Activated T-helper 2 cell treated with anti-CD3 and anti-CD28 coated beads, Interferon-gamma antibody, Interleukin-2, Interleukin-4, amounts not matched to agents 10 μg/mL and 5 μg/mL and 100 μg/mL, durations not matched to agents 14 hours and 24 hours and 36 hours (primary cell): ENCODE measurements at regions of chr11 and their contacts with region 1.

Region 1: GRCh38 chr11:33857933-33858371 is 33.9 kb downstream of the LMO2 start:
- DNase-seq: peak; percentile 48
- H3K4me3 Mint-ChIP-seq: no peak overlapping the region
- H3K27ac Mint-ChIP-seq: no peak overlapping the region
- H3K4me1 Mint-ChIP-seq: no peaks in the 10 kb centered on the region
- H3K27me3 Mint-ChIP-seq: peaks cover 49% of the 10 kb centered on the region

Region 2: DNA sequence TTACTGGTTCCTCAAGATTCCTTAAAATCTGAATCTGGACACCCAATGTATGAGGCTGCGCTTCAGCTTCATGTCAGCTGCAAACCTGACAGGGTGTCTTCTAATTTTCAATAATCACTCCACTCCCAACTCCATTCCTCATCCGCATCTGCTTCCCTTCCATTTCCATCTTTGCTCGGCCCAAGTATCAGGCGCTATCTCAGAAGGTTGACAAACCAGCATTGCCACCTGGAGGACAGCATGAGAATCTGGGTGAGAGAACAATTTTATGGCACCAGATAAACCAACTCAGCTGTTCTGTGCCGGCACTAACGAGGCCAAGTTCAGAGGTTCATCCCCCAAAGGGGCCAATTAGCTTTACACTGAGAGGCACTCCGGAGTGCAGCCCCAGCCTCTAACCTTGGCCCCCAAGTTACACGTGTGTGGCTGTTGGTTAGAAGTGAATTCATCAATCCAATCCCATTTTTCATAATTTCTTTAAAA is 113.1 kb after region 1 on chr11:
- intact Hi-C with region 1: loop called (anchors 1 kb)
- DNase-seq: no peak
- H3K4me3 Mint-ChIP-seq: no peak overlapping the region
- H3K27ac Mint-ChIP-seq: no peak overlapping the region
- H3K4me1 Mint-ChIP-seq: no peaks in the 10 kb centered on the region
- H3K27me3 Mint-ChIP-seq: peaks cover 16% of the 10 kb centered on the region

Region 3: DNA sequence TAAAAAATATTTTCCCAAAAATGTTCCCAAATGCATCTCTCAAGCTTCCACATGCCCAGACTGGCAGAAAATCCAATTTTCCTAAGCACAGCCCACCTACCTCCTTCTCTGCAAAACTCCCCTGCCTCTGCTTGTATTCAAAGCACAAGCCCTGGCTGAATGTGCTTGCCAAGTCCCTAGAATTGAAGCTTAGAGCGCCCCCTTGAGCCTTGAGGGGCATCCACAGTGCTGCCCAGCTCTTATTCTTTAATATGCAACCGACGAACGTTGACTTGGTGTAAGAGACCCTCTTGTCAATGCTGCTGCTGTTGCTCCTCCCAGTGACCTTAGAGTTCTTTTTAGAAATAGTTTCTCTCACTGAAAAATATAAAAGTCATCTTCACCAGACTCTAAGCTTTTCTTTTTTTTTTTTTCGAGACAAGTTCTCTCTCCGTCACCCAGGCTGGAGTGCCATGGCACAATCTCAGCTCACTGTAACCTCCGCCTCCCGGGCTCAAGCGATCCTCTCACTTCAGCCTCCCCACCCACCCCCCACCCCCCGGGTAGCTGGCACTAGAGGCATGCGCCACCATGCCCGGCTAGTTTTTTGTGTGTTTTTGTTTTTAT is 130.1 kb after region 1 on chr11:
- intact Hi-C with region 1: loop called (anchors 1 kb)
- DNase-seq: peak; percentile 54
- H3K4me3 Mint-ChIP-seq: no peak overlapping the region
- H3K27ac Mint-ChIP-seq: no peak overlapping the region
- H3K4me1 Mint-ChIP-seq: peaks cover 5% of the 10 kb centered on the region
- H3K27me3 Mint-ChIP-seq: peaks cover 3% of the 10 kb centered on the region